Heart right ventricle (tissue), 16 donors: ENCODE measurements at regions of chr3 and their contacts with region 1.

Region 1: GRCh38 chr3:123396163-123397049 is 52.5 kb downstream of the ADCY5 start:
- DNase-seq: no peak
- ATAC-seq: peak in 7 of 8 donors; percentile 34 to 63 (median 39)
- H3K4me3 ChIP-seq: no peak overlapping the region
- H3K27ac ChIP-seq: peak overlapping the region; percentile 20 to 94 (median 86)
- H3K4me1 ChIP-seq: peaks cover 11 to 96% (median 65%) of the 10 kb centered on the region in 9 donors
- H3K27me3 ChIP-seq: no peaks in the 10 kb centered on the region
- CTCF ChIP-seq: no peak

Region 2: DNA sequence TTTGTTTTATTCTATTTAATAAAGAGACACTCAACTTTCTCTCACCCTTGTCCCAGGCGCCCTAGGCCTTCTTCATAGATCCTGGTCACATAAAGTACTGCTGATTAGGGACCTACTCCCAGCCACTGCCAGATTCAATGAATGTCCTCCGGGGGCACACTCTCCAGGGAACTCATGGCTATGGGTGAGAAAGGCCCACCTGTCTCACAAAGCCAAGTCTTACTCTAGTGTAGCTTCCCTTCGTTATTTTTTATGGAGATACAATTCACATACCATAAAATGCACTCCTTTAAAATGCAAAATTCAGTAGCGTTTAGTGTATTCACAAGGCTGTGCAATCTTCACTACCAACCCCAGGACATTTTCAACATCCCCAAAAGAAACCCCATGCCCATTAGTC is 35.3 kb before region 1 on chr3:
- intact Hi-C with region 1: loop called in 1 of 10 experiments (anchors 1 kb)
- DNase-seq: no peak
- ATAC-seq: no peak
- H3K4me3 ChIP-seq: no peak overlapping the region
- H3K27ac ChIP-seq: peak overlapping the region in 1 of 10 donors; percentile 7
- H3K4me1 ChIP-seq: peaks cover 0 to 67% (median 22%) of the 10 kb centered on the region in 9 donors
- H3K27me3 ChIP-seq: no peaks in the 10 kb centered on the region
- CTCF ChIP-seq: no peak